ENCODE measurements at regions of chr2 and their contacts with region 1.

Region 1: GRCh38 chr2:119366649-119367471 is at the starts of genes C2orf76 and DBI:
- DNase-seq: peak; percentile 97
- H3K4me3 ChIP-seq: peak within 1 kb of the TSS; percentile 92
- H3K27ac ChIP-seq: peak within 1 kb of the TSS; percentile 77
- H3K4me1 ChIP-seq: peaks cover 39% of the 10 kb centered on the region
- CTCF ChIP-seq: no peak
- total RNA-seq, gene C2orf76: 14.2 and 15.4 TPM in 2 replicates
- total RNA-seq, gene DBI: 293 and 348 TPM in 2 replicates

Region 2: DNA sequence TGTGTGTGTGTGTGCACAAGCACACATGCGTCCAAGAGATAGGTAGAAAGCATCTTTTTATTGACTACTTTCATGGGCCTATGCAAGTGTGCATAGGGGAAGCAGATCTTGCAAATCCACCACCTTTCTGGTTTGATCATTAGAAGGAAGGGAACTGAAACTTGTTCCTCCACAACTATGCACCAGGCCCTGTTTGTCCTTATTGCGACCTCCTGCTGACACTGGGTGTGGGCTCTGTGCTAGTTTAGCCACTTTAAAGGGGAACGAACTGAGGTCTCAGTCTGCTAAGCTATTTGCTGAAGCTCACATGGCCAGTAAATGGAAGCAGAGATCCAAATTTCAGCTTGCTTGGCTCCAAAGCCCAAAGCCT is 1310.7 kb before region 1 on chr2:
- CTCF ChIA-PET with region 1: no interaction called
- POLR2A ChIA-PET with region 1: no interaction called
- intact Hi-C with region 1: loop called (anchors 10 kb)
- DNase-seq: peak; percentile 91
- H3K4me3 ChIP-seq: peak overlapping the region; percentile 60
- H3K27ac ChIP-seq: peak overlapping the region; percentile 94
- H3K4me1 ChIP-seq: peaks cover 68% of the 10 kb centered on the region
- CTCF ChIP-seq: no peak

Region 3: DNA sequence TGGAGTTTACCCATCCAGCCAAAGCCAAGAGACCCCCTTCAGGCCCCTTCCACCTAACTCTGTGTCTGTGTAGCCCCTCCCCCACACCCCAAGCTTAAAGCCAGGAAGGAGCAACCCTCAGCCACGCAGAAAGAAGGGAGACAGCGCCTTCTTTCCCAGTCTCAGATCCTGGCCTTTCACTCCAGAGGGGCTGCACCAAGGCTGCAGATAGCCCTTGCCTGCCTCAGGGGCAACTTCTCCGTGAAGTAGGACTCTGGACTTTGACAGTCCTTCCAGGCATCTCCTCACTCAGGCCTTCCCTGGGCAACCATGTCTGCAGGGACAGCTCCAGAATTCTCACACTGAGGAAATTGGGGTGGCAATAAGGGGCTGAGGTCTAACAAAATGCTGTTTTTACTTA is 492.5 kb before region 1 on chr2:
- CTCF ChIA-PET with region 1: no interaction called
- POLR2A ChIA-PET with region 1: no interaction called
- intact Hi-C with region 1: no loop called
- DNase-seq: no peak
- H3K4me3 ChIP-seq: no peak overlapping the region
- H3K27ac ChIP-seq: no peak overlapping the region
- H3K4me1 ChIP-seq: no peaks in the 10 kb centered on the region
- CTCF ChIP-seq: no peak

Region 4: GRCh38 chr2:119352357-119352756 is 14.5 kb before region 1 on chr2:
- CTCF ChIA-PET with region 1: interaction called, 5 read pairs
- POLR2A ChIA-PET with region 1: interaction called, 124 read pairs
- intact Hi-C with region 1: no loop called
- DNase-seq: peak; percentile 97
- H3K4me3 ChIP-seq: peak overlapping the region; percentile 32
- H3K27ac ChIP-seq: peak overlapping the region; percentile 96
- H3K4me1 ChIP-seq: peaks cover 71% of the 10 kb centered on the region
- CTCF ChIP-seq: no peak

Measured in OCI-LY7 (cell line).